MCF 10A (cell line): ENCODE measurements at regions of chr4 and their contacts with region 1.

Region 1: DNA sequence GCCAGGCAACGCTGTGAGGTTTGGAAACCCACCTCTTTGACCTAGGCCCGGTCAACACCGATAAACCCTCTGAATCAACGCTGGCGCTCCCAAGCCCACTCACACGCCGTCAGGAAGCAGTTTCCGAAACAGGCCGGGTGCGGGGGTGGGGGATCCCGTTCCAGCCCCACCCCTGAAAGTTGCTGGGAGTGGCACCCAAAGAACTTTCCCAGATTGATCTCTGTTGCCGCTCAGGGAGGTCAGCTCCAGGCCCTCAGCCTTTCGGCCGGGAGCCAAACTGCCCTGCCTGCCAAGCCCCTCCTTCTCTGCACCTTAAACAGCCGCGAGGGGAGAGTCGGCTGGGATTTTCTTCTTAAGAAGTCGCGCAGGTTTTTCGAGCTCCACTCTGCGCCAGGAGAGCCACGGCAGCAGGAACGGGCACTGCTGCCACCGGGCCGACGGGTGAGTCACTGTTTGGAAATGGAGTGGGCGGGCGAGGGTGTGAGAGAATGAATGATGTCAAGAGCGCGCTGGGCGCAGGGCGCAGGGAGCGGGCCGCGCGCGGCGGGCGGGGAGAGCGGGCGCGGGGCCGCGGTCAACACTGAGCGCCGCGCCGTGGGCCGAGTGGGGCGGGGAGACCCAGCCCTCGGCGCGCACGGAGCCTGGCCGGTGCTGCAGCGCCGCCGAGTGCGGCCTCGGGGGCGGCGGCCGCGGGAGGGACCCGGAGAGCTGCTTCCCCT is at the start of gene SGMS2:
- DNase-seq: peak; percentile 96
- H3K4me3 Mint-ChIP-seq: peak within 1 kb of the TSS; percentile 94
- H3K27ac Mint-ChIP-seq: peak within 1 kb of the TSS; percentile 100
- H3K4me1 Mint-ChIP-seq: peaks cover 30% of the 10 kb centered on the region
- H3K27me3 Mint-ChIP-seq: no peaks in the 10 kb centered on the region
- CTCF ChIP-seq: no peak
- total RNA-seq, gene SGMS2: 77.8 and 85.3 TPM in 2 replicates

Region 2: GRCh38 chr4:107719922-107720722 is 104.4 kb before region 1 on chr4 and contains the start of gene PAPSS1:
- CTCF ChIA-PET with region 1: no interaction called
- POLR2A ChIA-PET with region 1: interaction called, 58 read pairs
- intact Hi-C with region 1: no loop called
- DNase-seq: peak; percentile 98
- H3K4me3 Mint-ChIP-seq: peak within 1 kb of the TSS; percentile 82
- H3K27ac Mint-ChIP-seq: peak within 1 kb of the TSS; percentile 89
- H3K4me1 Mint-ChIP-seq: peaks cover 20% of the 10 kb centered on the region
- H3K27me3 Mint-ChIP-seq: no peaks in the 10 kb centered on the region
- CTCF ChIP-seq: no peak
- total RNA-seq, gene PAPSS1: 58.7 and 63.9 TPM in 2 replicates

Region 3: DNA sequence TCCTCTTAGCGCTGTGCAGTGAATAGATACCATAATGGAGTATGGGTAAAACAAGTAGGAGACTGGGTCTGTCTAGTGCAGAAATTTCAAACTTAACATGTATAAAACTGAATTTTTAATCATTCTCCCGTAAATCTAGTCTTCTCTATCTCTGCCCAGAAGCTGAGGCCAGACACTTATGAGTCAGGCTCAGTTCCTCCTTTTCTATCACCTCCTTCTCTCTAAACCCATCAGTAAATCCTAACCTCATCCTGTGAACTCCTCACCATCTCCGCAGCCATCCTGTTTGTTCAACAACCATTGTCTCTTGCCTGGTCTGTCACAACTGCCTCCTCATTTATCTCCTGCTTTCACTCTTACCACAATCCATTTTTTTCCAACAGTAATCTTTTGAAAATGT is 19.6 kb before region 1 on chr4:
- CTCF ChIA-PET with region 1: no interaction called
- POLR2A ChIA-PET with region 1: interaction called, 10 read pairs
- intact Hi-C with region 1: no loop called
- DNase-seq: no peak
- H3K4me3 Mint-ChIP-seq: no peak overlapping the region
- H3K27ac Mint-ChIP-seq: no peak overlapping the region
- H3K4me1 Mint-ChIP-seq: peaks cover 17% of the 10 kb centered on the region
- H3K27me3 Mint-ChIP-seq: no peaks in the 10 kb centered on the region
- CTCF ChIP-seq: no peak

Region 4: DNA sequence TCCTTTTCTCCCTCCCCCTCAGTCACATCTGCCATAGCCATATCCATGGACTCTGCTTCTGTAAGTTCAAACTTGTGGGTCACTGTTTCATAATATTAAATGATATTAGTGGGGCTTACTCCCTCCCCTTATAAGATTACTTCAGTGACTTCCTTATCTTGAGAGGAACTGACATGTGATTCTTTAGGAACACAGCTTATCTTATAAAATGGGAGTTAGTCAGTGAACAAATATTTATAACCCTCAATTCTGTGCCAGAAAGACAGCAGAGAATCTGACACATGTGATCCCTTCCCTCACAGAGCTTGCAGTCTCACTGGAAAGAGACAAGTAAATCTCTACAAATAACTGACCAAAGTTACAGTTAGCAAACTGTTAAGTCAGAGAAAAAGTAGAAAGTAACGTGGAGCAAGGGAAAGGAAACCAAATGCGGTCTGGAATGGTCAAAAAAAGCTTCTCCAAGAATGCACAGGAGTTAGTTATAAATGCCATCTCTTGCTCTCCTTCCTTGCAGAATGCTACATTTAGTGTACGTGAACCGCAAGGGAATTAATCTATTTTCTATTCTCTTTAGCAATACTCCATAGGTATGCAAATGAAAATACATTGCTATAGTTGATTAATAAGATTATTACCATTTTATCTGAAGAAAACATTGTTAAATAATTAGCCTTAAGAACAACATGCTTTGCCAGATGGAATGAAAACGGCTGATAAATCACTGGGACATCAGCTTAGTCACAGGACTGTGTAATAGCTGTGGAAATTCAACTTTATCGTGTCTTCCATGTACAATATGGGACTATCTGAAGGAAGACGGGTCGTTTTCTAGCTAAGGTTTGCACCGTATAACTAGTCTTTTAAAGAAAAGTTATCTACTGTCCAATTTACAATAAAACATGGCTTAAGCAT is 29.2 kb after region 1 on chr4:
- CTCF ChIA-PET with region 1: interaction called, 4 read pairs
- POLR2A ChIA-PET with region 1: interaction called, 248 read pairs
- intact Hi-C with region 1: no loop called
- DNase-seq: no peak
- H3K4me3 Mint-ChIP-seq: no peak overlapping the region
- H3K27ac Mint-ChIP-seq: peak overlapping the region; percentile 88
- H3K4me1 Mint-ChIP-seq: peaks cover 58% of the 10 kb centered on the region
- H3K27me3 Mint-ChIP-seq: no peaks in the 10 kb centered on the region
- CTCF ChIP-seq: no peak

Region 5: DNA sequence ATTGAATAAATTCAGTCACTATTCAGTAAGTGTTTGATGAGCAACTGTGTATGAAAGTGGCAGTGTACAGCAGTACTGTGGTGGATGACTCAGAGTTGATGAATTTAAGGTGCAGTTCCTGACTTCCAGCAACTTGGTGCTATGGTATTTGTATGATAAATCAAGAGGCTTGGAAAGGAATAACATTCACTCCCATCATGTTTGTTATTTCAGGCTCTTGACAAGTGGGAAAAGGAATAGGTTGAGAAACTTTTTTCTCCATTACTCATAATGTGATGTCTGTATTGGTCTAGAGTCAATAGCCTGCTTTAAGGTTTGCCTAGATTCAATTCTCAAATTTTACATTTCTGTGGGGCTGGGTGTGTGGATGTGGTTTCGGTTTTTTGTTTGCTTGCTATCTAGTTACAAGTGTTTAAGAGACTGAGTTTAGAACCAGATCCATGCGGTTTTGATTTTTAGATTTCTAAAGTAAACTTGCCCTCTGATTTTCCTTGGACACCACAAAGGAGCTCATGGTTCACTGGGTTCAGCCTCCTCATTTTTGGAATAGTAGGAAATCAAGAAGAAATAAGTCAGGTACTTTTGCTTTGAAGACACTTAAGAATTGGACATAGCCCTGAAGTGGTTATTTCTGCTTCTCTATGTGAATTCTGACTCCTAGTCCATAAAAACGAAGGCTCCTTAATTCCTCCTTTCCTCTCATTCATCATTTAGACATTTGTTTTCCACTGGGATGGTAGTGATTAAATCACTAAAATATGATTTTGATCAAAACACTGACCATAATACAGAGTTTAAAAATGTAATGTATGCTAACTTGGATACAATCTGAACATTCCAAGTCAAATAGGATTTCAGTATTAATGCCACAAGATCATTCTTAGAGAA is 71.9 kb after region 1 on chr4:
- CTCF ChIA-PET with region 1: interaction called, 13 read pairs
- POLR2A ChIA-PET with region 1: interaction called, 373 read pairs
- intact Hi-C with region 1: loop called (anchors 1 kb)
- DNase-seq: peak; percentile 96
- H3K4me3 Mint-ChIP-seq: peak overlapping the region; percentile 67
- H3K27ac Mint-ChIP-seq: peak overlapping the region; percentile 98
- H3K4me1 Mint-ChIP-seq: peaks cover 55% of the 10 kb centered on the region
- H3K27me3 Mint-ChIP-seq: no peaks in the 10 kb centered on the region
- CTCF ChIP-seq: no peak

Region 6: GRCh38 chr4:107930821-107931774 is 106.6 kb after region 1 on chr4 and contains the start of gene CYP2U1:
- CTCF ChIA-PET with region 1: no interaction called
- POLR2A ChIA-PET with region 1: interaction called, 15 read pairs
- intact Hi-C with region 1: no loop called
- DNase-seq: peak; percentile 79
- H3K4me3 Mint-ChIP-seq: peak within 1 kb of the TSS; percentile 81
- H3K27ac Mint-ChIP-seq: no peak within 1 kb of the TSS
- H3K4me1 Mint-ChIP-seq: peaks cover 18% of the 10 kb centered on the region
- H3K27me3 Mint-ChIP-seq: no peaks in the 10 kb centered on the region
- CTCF ChIP-seq: no peak
- total RNA-seq, gene CYP2U1: 2.5 and 2.8 TPM in 2 replicates